GM12878 (cell line): ENCODE measurements at regions of chr3 and their contacts with region 1.

Region 1: DNA sequence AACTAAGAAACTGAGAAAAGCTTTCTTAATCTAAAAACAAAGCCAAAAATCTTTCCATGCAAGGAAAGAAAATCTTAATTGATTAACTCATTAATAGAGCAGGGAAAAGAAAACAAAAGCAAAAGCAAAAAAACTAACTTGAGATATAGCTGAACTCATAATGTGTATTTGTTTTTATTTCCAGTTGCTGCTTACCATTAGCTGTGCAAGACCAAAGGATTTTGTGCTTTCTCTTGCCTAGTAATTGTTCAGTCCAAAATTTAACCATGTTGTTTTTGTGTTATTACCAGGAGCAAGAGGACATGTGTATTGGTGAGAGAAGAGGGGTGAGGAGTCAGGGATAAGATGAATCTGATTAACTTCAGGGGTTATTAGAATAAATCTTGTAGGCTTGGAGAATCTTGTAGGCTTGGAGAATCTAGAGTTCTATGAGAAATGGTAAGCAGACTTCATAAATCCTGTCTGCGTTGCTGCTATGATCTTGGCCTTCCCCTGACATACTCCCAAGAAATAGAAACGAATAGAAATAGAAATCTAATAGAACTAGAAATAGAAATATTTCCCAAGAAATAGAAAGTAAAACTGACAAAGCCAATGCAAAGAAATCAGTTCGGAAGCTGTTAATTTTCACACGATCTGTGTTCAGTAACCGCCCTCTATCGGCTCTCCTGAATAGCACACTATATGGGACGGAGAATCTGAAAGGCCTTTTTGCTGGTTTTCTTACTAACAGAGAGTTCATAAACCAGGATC is 72.6 kb upstream of the TNFSF10 start:
- DNase-seq: peak; percentile 60
- ATAC-seq: peak; percentile 48
- H3K4me3 ChIP-seq: peak overlapping the region; percentile 37; the same call in 1 of the 2 replicates
- H3K27ac ChIP-seq: peak overlapping the region; percentile 62
- H3K4me1 ChIP-seq: peaks cover 29% of the 10 kb centered on the region
- H3K27me3 ChIP-seq: no peaks in the 10 kb centered on the region
- CTCF ChIP-seq: peak; percentile 83 to 91 (median 87)
- EP300 ChIP-seq: no peak
- POLR2A ChIP-seq: no peak
- RAD21 ChIP-seq: peak; percentile 96

Region 2: GRCh38 chr3:172461530-172462138 is 134.2 kb before region 1 on chr3:
- CTCF ChIA-PET with region 1: interaction called, 47 read pairs
- POLR2A ChIA-PET with region 1: no interaction called
- RAD21 ChIA-PET with region 1: interaction called, 26 read pairs
- SMC1A ChIA-PET with region 1: interaction called, 14 read pairs
- in situ Hi-C with region 1: no loop called
- intact Hi-C with region 1: no loop called
- DNase-seq: no peak
- ATAC-seq: peak; percentile 84
- H3K4me3 ChIP-seq: no peak overlapping the region
- H3K27ac ChIP-seq: no peak overlapping the region
- H3K4me1 ChIP-seq: no peaks in the 10 kb centered on the region
- H3K27me3 ChIP-seq: no peaks in the 10 kb centered on the region; a peak in 2 of 4 replicates
- CTCF ChIP-seq: peak; percentile 68 to 93 (median 91)
- EP300 ChIP-seq: no peak
- POLR2A ChIP-seq: no peak
- RAD21 ChIP-seq: peak; percentile 59

Region 3: DNA sequence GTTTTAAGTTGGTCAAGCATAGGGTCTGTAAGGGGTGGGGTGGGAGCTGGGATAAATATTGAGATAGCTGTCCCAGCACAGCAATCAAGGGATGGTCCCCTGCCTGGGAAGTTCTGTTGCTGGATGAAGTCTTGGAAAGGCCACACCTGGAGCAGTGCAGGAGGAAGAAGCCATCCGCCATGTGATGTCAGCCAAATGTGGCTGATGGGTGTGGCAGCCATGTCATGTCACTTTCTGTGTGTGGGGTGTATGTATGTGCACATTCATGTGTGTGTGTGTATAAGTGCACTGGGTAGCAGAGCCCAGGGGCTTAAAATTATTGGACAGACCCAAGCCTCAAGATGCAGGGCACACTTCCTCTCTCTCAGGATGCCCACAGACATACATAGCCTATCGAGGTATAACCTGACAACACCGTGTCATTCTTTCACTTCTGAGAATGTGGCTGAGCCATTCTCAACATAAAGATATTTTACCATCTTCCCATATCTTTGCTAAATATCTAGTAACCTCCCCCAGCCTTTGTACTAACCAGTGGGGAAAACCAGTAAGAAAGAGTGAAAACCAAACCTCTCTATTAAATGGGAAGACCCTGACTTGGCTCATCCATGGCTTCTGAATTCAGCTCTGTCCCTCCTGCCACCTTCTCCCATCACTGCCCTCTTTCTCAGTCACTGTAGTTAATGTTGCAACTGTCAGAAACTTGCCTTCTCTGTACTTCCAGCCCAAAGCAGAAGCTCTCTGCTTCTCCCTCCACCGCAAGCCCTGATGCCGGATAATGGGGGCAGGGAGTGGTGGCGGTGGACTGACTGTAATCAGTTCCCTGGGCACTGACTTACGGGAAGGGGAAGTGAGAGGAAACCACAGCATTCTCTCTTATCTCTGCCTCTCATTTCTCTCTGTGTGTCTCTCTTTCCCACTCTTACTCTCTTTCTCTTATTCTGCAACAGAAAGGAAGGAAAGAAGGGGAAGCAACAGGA is 83.7 kb before region 1 on chr3:
- CTCF ChIA-PET with region 1: interaction called, 15 read pairs
- POLR2A ChIA-PET with region 1: interaction called, 3 read pairs
- RAD21 ChIA-PET with region 1: interaction called, 22 read pairs
- SMC1A ChIA-PET with region 1: interaction called, 27 read pairs
- in situ Hi-C with region 1: no loop called
- intact Hi-C with region 1: loop called (anchors 2 kb)
- DNase-seq: peak; percentile 55
- ATAC-seq: peak; percentile 84
- H3K4me3 ChIP-seq: no peak overlapping the region
- H3K27ac ChIP-seq: peak overlapping the region; percentile 27
- H3K4me1 ChIP-seq: peaks cover 19% of the 10 kb centered on the region
- H3K27me3 ChIP-seq: no peaks in the 10 kb centered on the region
- CTCF ChIP-seq: no peak
- EP300 ChIP-seq: peak in 1 of 2 experiments; percentile 54; a peak in 1 of 4 replicates
- POLR2A ChIP-seq: no peak
- RAD21 ChIP-seq: no peak

Region 4: GRCh38 chr3:172580680-172581401 is 15.0 kb before region 1 on chr3:
- CTCF ChIA-PET with region 1: interaction called, 19 read pairs
- POLR2A ChIA-PET with region 1: interaction called, 11 read pairs
- RAD21 ChIA-PET with region 1: interaction called, 29 read pairs
- SMC1A ChIA-PET with region 1: interaction called, 78 read pairs
- in situ Hi-C with region 1: no loop called
- intact Hi-C with region 1: loop called (anchors 1 kb)
- DNase-seq: no peak
- ATAC-seq: peak; percentile 88
- H3K4me3 ChIP-seq: no peak overlapping the region
- H3K27ac ChIP-seq: peak overlapping the region; percentile 3; the same call in 1 of the 2 replicates
- H3K4me1 ChIP-seq: peaks cover 27% of the 10 kb centered on the region
- H3K27me3 ChIP-seq: no peaks in the 10 kb centered on the region
- CTCF ChIP-seq: no peak
- EP300 ChIP-seq: peak in 1 of 2 experiments; percentile 26; a peak in 1 of 4 replicates
- POLR2A ChIP-seq: no peak
- RAD21 ChIP-seq: no peak

Region 5: GRCh38 chr3:172648747-172649146 is 52.9 kb after region 1 on chr3:
- CTCF ChIA-PET with region 1: no interaction called
- POLR2A ChIA-PET with region 1: no interaction called
- RAD21 ChIA-PET with region 1: no interaction called
- SMC1A ChIA-PET with region 1: no interaction called
- in situ Hi-C with region 1: no loop called
- intact Hi-C with region 1: no loop called
- DNase-seq: no peak
- ATAC-seq: no peak
- H3K4me3 ChIP-seq: no peak overlapping the region
- H3K27ac ChIP-seq: no peak overlapping the region
- H3K4me1 ChIP-seq: no peaks in the 10 kb centered on the region
- H3K27me3 ChIP-seq: no peaks in the 10 kb centered on the region
- CTCF ChIP-seq: no peak
- EP300 ChIP-seq: no peak
- POLR2A ChIP-seq: no peak
- RAD21 ChIP-seq: no peak

Region 6: GRCh38 chr3:172666873-172667694 is 71.3 kb after region 1 on chr3:
- CTCF ChIA-PET with region 1: interaction called, 33 read pairs
- POLR2A ChIA-PET with region 1: no interaction called
- RAD21 ChIA-PET with region 1: interaction called, 4 read pairs
- SMC1A ChIA-PET with region 1: interaction called, 13 read pairs
- in situ Hi-C with region 1: no loop called
- intact Hi-C with region 1: loop called (anchors 2 kb)
- DNase-seq: no peak
- ATAC-seq: peak; percentile 100
- H3K4me3 ChIP-seq: no peak overlapping the region
- H3K27ac ChIP-seq: no peak overlapping the region
- H3K4me1 ChIP-seq: no peaks in the 10 kb centered on the region
- H3K27me3 ChIP-seq: no peaks in the 10 kb centered on the region
- CTCF ChIP-seq: peak; percentile 86 to 96 (median 95)
- EP300 ChIP-seq: no peak
- POLR2A ChIP-seq: no peak
- RAD21 ChIP-seq: peak; percentile 95